ENCODE measurements at regions of chrX and their contacts with region 1.

Region 1: DNA sequence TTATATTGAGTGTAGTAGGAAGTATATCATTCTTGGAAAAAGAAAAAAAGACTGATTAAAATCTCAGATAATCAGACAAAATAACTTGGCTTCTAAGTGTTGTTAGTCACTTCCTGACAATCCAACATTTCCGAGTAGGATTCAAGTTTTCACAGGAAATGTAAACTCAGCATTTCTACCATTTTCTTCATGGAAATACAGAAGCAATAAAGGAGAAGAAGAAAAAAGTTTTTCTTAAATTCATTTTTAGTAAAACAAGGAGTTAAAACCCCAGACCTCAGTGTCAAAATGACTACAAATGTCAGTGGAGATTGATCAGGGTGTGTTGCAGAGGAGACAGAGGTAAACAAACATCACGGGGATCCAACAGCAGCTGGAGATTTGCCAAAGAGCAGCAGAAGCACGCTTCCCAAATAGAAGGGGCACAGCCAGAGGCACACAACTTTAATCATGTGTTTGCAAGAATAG is 129.3 kb upstream of the FAM9B start:
- DNase-seq: no peak
- ATAC-seq: no peak
- H3K4me3 ChIP-seq: no peak overlapping the region
- H3K4me3 Mint-ChIP-seq: no peak overlapping the region
- H3K27ac ChIP-seq: no peak overlapping the region
- H3K27ac Mint-ChIP-seq: no peak overlapping the region
- H3K4me1 ChIP-seq: no peaks in the 10 kb centered on the region
- H3K4me1 Mint-ChIP-seq: peaks cover 21% of the 10 kb centered on the region
- H3K27me3 ChIP-seq: no peaks in the 10 kb centered on the region
- H3K27me3 Mint-ChIP-seq: no peaks in the 10 kb centered on the region
- CTCF ChIP-seq: no peak

Region 2: DNA sequence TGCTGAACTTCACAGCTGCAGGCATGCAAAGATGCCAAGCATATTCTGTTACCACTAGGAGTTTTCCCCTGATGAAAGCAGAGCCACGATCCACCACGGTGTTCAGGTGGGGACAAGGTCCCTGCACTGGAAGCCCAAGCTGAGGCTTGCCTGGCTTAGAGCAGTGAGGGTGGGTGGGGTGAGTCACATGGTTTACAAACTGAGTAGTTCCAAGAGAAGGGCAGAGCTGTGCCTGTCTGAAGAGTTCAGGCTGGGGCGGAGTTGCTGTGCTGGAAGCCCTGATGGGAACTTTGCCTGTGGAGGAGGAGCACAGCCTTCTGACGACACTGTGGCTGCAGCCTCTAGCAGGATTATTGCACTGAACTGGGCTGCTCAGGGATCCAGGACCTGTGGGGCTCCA is 174.8 kb before region 1 on chrX:
- CTCF ChIA-PET with region 1: no interaction called
- POLR2A ChIA-PET with region 1: interaction called, 3 read pairs
- intact Hi-C with region 1: loop called in 1 of 2 experiments (anchors 10 kb)
- DNase-seq: peak in 5 of 14 experiments; percentile 11 to 40 (median 19)
- ATAC-seq: peak; percentile 39
- H3K4me3 ChIP-seq: no peak overlapping the region
- H3K4me3 Mint-ChIP-seq: peak overlapping the region; percentile 15
- H3K27ac ChIP-seq: peak overlapping the region in 1 of 2 donors; percentile 17
- H3K27ac Mint-ChIP-seq: peak overlapping the region; percentile 91
- H3K4me1 ChIP-seq: peaks cover 16% of the 10 kb centered on the region
- H3K4me1 Mint-ChIP-seq: peaks cover 33% of the 10 kb centered on the region
- H3K27me3 ChIP-seq: no peaks in the 10 kb centered on the region
- H3K27me3 Mint-ChIP-seq: no peaks in the 10 kb centered on the region
- CTCF ChIP-seq: no peak

Region 3: DNA sequence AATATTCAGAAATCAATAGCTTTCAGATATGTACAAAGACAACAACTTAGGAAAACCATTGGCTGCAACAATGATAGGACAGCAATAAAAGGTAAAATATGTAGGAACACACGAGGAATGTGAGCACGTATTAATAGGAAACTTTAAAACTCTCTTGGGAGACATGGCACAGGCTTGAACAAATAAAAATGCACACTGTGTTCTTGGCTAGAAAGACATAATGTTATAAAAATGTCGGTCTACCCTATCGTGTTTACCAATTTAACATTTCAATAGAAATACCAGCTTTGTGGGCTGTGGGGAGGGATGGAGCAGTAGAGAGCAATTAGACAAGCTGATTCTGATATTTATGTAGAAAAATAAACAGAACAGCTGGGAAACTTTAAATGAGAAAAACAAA is 60.3 kb before region 1 on chrX:
- CTCF ChIA-PET with region 1: no interaction called
- POLR2A ChIA-PET with region 1: no interaction called
- intact Hi-C with region 1: loop called in 1 of 2 experiments (anchors 2 kb)
- DNase-seq: no peak
- ATAC-seq: no peak
- H3K4me3 ChIP-seq: no peak overlapping the region
- H3K4me3 Mint-ChIP-seq: no peak overlapping the region
- H3K27ac ChIP-seq: no peak overlapping the region
- H3K27ac Mint-ChIP-seq: no peak overlapping the region
- H3K4me1 ChIP-seq: no peaks in the 10 kb centered on the region
- H3K4me1 Mint-ChIP-seq: no peaks in the 10 kb centered on the region
- H3K27me3 ChIP-seq: no peaks in the 10 kb centered on the region
- H3K27me3 Mint-ChIP-seq: no peaks in the 10 kb centered on the region
- CTCF ChIP-seq: no peak

Region 4: GRCh38 chrX:9147721-9148120 is 15.5 kb before region 1 on chrX:
- CTCF ChIA-PET with region 1: no interaction called
- POLR2A ChIA-PET with region 1: no interaction called
- intact Hi-C with region 1: no loop called
- DNase-seq: no peak
- ATAC-seq: no peak
- H3K4me3 ChIP-seq: no peak overlapping the region
- H3K4me3 Mint-ChIP-seq: no peak overlapping the region
- H3K27ac ChIP-seq: no peak overlapping the region
- H3K27ac Mint-ChIP-seq: no peak overlapping the region
- H3K4me1 ChIP-seq: no peaks in the 10 kb centered on the region
- H3K4me1 Mint-ChIP-seq: no peaks in the 10 kb centered on the region
- H3K27me3 ChIP-seq: no peaks in the 10 kb centered on the region
- H3K27me3 Mint-ChIP-seq: no peaks in the 10 kb centered on the region
- CTCF ChIP-seq: no peak

Region 5: GRCh38 chrX:9396930-9397329 is 233.7 kb after region 1 on chrX:
- CTCF ChIA-PET with region 1: no interaction called
- POLR2A ChIA-PET with region 1: no interaction called
- intact Hi-C with region 1: no loop called
- DNase-seq: no peak
- ATAC-seq: no peak
- H3K4me3 ChIP-seq: no peak overlapping the region
- H3K4me3 Mint-ChIP-seq: no peak overlapping the region
- H3K27ac ChIP-seq: no peak overlapping the region
- H3K27ac Mint-ChIP-seq: no peak overlapping the region
- H3K4me1 ChIP-seq: no peaks in the 10 kb centered on the region
- H3K4me1 Mint-ChIP-seq: no peaks in the 10 kb centered on the region
- H3K27me3 ChIP-seq: no peaks in the 10 kb centered on the region
- H3K27me3 Mint-ChIP-seq: no peaks in the 10 kb centered on the region
- CTCF ChIP-seq: no peak